ENCODE measurements at regions of chr7 and their contacts with region 1.

Region 1: GRCh38 chr7:6272481-6273323 is at the start of gene CYTH3:
- DNase-seq: peak; percentile 100
- H3K4me3 ChIP-seq: peak within 1 kb of the TSS; percentile 79 to 94
- H3K27ac ChIP-seq: peak within 1 kb of the TSS; percentile 64 to 70
- H3K4me1 ChIP-seq: peaks cover 12 to 28% of the 10 kb centered on the region in 2 experiments; a peak in 2 of 4 replicates
- H3K27me3 ChIP-seq: no peaks in the 10 kb centered on the region
- CTCF ChIP-seq: no peak
- EP300 ChIP-seq: no peak
- RAD21 ChIP-seq: peak; percentile 1; the same call in 1 of the 2 replicates
- polyA plus RNA-seq, gene CYTH3: 55.1 and 56.8 TPM in 2 replicates

Region 2: DNA sequence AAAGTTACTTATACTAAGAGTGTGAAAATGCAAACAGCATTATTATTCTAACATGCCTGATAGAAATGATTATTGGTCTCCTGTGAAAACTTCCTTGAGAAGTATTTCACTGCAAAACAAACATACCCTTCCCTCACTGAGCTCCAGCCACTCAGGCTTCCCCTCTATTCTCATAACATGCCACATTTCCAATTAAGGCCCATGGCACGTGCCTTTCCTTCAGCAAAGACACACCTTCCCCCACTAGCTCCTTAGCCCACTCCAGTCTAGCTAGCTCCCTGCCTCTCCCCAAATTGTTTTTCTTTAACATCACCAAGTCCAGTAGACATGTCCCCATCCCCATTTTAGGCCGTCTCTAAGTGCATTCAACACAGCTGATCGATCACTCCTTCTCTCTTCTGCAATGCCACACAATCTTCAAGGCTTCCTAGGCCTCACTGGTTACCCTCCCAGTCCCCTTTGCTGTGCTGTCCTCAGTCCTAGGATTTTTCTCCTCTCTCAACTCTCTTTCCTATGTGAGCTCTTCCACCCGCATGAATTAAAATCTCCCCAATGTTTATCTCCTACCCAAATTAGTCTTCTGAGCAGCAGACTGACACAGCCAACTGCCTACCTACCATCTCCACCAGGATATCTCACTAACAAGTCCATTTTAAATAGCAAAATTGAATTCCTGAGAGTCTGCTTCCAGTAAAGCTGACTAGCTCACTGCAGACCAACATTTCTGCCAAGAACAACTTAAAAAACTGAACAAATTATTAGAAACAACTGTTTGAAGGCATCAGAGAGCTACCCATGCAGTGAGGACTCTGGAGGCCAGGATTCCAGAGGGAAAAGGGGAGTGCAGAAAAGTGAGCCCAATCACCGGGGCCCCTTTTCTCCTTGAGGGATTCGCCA is 12.2 kb before region 1 on chr7:
- CTCF ChIA-PET with region 1: interaction called, 13 read pairs
- POLR2A ChIA-PET with region 1: no interaction called
- DNase-seq: no peak
- H3K4me3 ChIP-seq: no peak overlapping the region
- H3K27ac ChIP-seq: peak overlapping the region; percentile 64 to 92
- H3K4me1 ChIP-seq: peaks cover 29 to 53% of the 10 kb centered on the region in 2 experiments
- H3K27me3 ChIP-seq: no peaks in the 10 kb centered on the region
- CTCF ChIP-seq: no peak
- EP300 ChIP-seq: no peak
- RAD21 ChIP-seq: no peak

Region 3: DNA sequence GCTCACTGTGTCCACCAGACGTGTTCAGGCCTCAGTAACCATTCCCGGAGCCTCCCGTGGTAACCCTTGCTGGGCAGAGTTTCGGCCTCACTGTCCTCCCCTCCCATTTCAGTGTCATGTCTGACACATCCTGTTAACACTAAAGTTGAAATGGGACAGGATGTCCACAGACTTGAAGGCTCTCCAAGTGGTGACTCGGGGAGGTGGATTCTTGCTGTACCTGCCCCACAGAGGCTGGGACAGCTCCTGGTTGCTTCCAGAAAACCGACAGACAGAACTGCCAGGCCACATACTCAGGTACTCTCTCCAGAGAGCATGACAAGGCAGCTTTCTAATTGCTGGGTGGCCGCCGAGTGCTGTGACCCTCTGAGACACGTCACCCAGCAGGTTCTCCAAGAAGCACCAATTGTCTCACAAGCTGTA is 17.6 kb after region 1 on chr7:
- CTCF ChIA-PET with region 1: no interaction called
- POLR2A ChIA-PET with region 1: no interaction called
- DNase-seq: no peak
- H3K4me3 ChIP-seq: no peak overlapping the region
- H3K27ac ChIP-seq: no peak overlapping the region
- H3K4me1 ChIP-seq: no peaks in the 10 kb centered on the region
- H3K27me3 ChIP-seq: no peaks in the 10 kb centered on the region
- CTCF ChIP-seq: no peak
- EP300 ChIP-seq: no peak
- RAD21 ChIP-seq: no peak